Naive thymus-derived CD4-positive, alpha-beta T cell (primary cell): ENCODE measurements at regions of chr4 and their contacts with region 1.

Region 1: DNA sequence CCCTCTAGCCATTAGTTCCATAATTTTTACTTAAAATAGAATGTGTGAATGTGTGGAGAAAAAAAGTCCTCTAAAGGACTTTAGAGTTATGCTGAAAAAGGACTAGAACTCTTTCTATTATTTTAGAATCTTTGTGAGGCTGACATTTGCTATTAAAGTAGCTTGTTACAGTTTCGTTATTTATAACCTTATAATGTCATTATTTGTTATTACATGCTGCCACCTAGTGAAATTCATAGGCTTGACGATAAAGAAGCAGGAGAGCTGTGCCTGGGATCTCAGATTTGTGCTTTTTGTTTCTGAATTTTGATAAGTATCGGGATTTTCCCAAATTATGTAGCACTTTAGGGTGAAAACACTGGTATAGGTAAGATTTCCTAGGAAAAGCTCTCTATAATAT is 38.5 kb upstream of the TAPT1 start:
- DNase-seq: peak in 7 of 9 donors; percentile 14 to 59 (median 34)
- ATAC-seq: peak; percentile 40
- H3K4me3 ChIP-seq: no peak overlapping the region
- H3K4me3 Mint-ChIP-seq: no peak overlapping the region
- H3K27ac ChIP-seq: no peak overlapping the region
- H3K27ac Mint-ChIP-seq: no peak overlapping the region
- H3K4me1 ChIP-seq: peaks cover 0 to 3% of the 10 kb centered on the region in 2 donors
- H3K4me1 Mint-ChIP-seq: peaks cover 0 to 11% (median 4%) of the 10 kb centered on the region in 7 donors
- H3K27me3 ChIP-seq: no peaks in the 10 kb centered on the region
- H3K27me3 Mint-ChIP-seq: peaks cover 0 to 2% (median 0%) of the 10 kb centered on the region in 5 donors

Region 2: DNA sequence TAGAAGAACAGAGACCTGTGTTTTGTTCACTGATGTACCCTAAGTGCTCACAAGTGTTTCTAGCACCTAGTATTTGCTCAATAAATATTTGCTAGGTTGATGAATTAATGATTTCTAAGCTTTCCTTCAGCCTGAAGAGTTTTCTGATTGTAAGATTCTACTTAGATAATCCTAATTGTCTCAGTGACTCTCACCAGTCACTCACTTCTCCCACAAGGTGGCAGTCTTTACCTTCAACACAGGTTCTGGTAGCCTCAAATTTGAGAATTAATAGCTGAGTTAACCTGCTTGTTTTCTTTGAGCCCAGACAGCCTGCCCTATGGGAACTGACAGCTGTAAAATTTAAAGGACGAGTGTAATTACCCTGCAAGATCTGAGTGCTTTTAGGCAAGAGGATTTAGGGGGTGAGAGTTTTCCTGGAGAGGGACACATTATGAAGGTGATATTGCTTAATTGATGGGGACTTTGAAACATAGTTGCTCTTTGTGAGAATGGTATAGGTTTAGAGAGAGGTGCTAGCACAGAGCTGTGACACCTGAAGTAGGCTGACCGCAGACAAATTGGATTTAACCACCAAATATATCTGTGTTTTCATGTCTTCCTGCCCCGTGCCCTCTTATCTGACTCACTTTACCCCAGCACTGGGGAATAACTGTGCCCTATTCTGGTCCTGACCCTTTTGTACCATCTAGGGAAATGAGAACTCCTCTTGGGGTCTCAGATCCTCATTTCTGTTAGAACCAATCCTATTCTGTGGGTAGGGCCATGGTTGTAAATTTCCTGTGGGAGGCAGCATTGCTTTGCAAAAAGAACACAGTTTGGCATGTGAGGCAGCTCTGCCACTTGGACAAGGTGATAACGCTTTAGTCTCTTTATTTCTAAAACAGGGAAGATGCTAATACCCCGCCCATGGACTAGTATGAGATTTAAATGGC is 458.9 kb before region 1 on chr4:
- CTCF ChIA-PET with region 1: interaction called, 3 read pairs
- POLR2A ChIA-PET with region 1: no interaction called
- intact Hi-C with region 1: loop called in 1 of 2 experiments (anchors 2 kb)
- DNase-seq: peak in 7 of 9 donors; percentile 37 to 64 (median 52)
- ATAC-seq: peak; percentile 80
- H3K4me3 ChIP-seq: no peak overlapping the region
- H3K4me3 Mint-ChIP-seq: no peak overlapping the region
- H3K27ac ChIP-seq: no peak overlapping the region
- H3K27ac Mint-ChIP-seq: peak overlapping the region in 3 of 9 donors; percentile 21 to 78 (median 60)
- H3K4me1 ChIP-seq: peaks cover 0 to 4% of the 10 kb centered on the region in 2 donors
- H3K4me1 Mint-ChIP-seq: peaks cover 26 to 76% (median 43%) of the 10 kb centered on the region in 7 donors
- H3K27me3 ChIP-seq: no peaks in the 10 kb centered on the region
- H3K27me3 Mint-ChIP-seq: no peaks in the 10 kb centered on the region

Region 3: GRCh38 chr4:15882675-15883086 is 382.1 kb before region 1 on chr4:
- CTCF ChIA-PET with region 1: interaction called, 4 read pairs
- POLR2A ChIA-PET with region 1: no interaction called
- intact Hi-C with region 1: loop called (anchors 1 to 10 kb)
- DNase-seq: peak in 7 of 9 donors; percentile 22 to 52 (median 41)
- ATAC-seq: peak; percentile 89
- H3K4me3 ChIP-seq: no peak overlapping the region
- H3K4me3 Mint-ChIP-seq: no peak overlapping the region
- H3K27ac ChIP-seq: no peak overlapping the region
- H3K27ac Mint-ChIP-seq: peak overlapping the region in 1 of 9 donors; percentile 2
- H3K4me1 ChIP-seq: no peaks in the 10 kb centered on the region
- H3K4me1 Mint-ChIP-seq: peaks cover 0 to 13% (median 0%) of the 10 kb centered on the region in 7 donors
- H3K27me3 ChIP-seq: no peaks in the 10 kb centered on the region
- H3K27me3 Mint-ChIP-seq: peaks cover 0 to 20% (median 4%) of the 10 kb centered on the region in 5 donors

Region 4: DNA sequence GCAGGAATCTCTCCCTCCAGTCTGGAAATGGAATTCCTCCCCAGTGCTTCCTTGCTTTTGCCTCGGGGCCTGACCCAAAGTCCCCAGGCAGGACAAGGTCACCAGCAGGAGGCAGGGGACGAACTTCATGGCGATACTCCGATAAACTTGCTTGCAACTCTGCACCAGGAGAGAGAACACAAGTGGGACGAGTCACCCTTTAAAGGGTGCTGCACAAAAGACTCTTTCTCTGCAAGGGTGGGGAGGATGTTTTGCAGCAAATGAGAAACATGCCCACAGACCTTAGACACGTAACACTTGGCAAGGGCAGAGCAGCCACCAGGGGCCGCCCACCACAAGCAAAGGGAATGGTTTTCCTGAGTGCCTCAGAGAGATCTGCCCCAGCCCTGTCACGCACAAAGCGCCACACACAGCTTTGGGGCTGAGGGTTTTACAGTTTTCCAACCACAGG is 301.8 kb before region 1 on chr4 and contains the start of gene FGFBP2:
- CTCF ChIA-PET with region 1: interaction called, 3 read pairs
- POLR2A ChIA-PET with region 1: no interaction called
- intact Hi-C with region 1: loop called in 1 of 2 experiments (anchors 5 kb)
- DNase-seq: peak; percentile 10 to 73 (median 57)
- ATAC-seq: peak; percentile 78
- H3K4me3 ChIP-seq: no peak within 1 kb of the TSS
- H3K4me3 Mint-ChIP-seq: peak within 1 kb of the TSS in 9 of 10 donors; percentile 33 to 83 (median 56)
- H3K27ac ChIP-seq: no peak within 1 kb of the TSS
- H3K27ac Mint-ChIP-seq: peak within 1 kb of the TSS in 5 of 9 donors; percentile 43 to 59 (median 51)
- H3K4me1 ChIP-seq: peaks cover 5 to 15% of the 10 kb centered on the region in 2 donors
- H3K4me1 Mint-ChIP-seq: peaks cover 6 to 26% (median 18%) of the 10 kb centered on the region in 7 donors
- H3K27me3 ChIP-seq: no peaks in the 10 kb centered on the region
- H3K27me3 Mint-ChIP-seq: peaks cover 6 to 14% (median 8%) of the 10 kb centered on the region in 5 donors
- total RNA-seq, gene FGFBP2: 1.2 to 54.8 (median 4.5) TPM

Region 5: DNA sequence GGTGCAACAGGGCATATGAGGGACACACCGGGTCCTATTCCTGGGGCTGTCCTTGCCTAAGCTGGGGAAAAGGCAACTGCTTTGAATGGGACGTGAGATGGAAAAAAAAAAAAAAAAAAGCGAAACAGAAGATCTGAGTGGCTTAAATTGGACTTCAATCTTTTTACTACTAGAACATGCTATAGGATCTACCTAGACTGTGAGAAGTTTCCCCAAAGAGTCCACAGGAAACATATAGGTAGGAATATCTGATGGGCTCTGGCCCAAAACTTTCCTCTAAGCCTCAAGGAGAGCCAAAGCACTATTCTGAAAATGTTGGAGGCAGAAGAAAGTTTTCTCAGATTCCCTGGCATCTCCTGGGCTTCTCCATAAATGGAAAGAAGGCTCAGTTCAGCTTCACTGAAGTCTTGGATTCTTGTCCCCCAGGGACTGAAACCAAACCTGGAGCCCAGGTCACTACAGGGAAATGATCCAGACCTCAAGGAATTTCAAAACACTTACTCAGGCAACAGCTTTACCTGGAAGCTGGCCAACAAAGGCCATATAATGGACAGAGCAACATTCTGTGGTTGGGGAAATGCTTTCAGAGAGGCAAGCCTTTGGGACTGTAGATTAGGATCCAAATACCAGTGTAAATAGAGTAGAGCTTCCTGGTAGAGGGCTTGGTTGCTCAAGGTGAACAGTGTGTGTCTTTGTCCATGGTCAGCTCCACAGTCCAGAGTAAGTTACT is 124.1 kb before region 1 on chr4:
- CTCF ChIA-PET with region 1: no interaction called
- POLR2A ChIA-PET with region 1: no interaction called
- intact Hi-C with region 1: no loop called
- DNase-seq: no peak
- ATAC-seq: no peak
- H3K4me3 ChIP-seq: no peak overlapping the region
- H3K4me3 Mint-ChIP-seq: no peak overlapping the region
- H3K27ac ChIP-seq: no peak overlapping the region
- H3K27ac Mint-ChIP-seq: no peak overlapping the region
- H3K4me1 ChIP-seq: no peaks in the 10 kb centered on the region
- H3K4me1 Mint-ChIP-seq: no peaks in the 10 kb centered on the region
- H3K27me3 ChIP-seq: no peaks in the 10 kb centered on the region
- H3K27me3 Mint-ChIP-seq: peaks cover 0 to 28% (median 4%) of the 10 kb centered on the region in 5 donors

Region 6: DNA sequence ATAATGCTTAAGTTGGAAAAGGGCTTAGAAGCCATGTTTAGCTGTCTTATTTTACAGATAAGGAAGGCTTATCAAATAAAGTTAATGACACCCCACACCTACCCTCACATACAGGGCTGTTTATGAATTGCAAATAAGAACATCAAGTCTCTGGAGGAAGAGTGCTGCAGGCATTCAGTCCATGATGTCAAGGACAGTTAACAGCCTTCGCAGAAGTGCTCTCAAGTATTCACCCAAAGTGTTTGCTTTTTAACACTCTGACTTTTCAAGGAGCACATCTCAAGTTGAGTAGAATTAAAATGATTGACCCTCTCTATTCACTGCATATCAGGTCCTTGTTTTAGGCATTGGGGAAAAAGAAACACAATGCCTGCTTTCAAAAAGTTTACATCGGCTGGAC is 305.0 kb after region 1 on chr4:
- CTCF ChIA-PET with region 1: no interaction called
- POLR2A ChIA-PET with region 1: no interaction called
- intact Hi-C with region 1: no loop called
- DNase-seq: no peak
- ATAC-seq: no peak
- H3K4me3 ChIP-seq: no peak overlapping the region
- H3K4me3 Mint-ChIP-seq: no peak overlapping the region
- H3K27ac ChIP-seq: no peak overlapping the region
- H3K27ac Mint-ChIP-seq: no peak overlapping the region
- H3K4me1 ChIP-seq: no peaks in the 10 kb centered on the region
- H3K4me1 Mint-ChIP-seq: no peaks in the 10 kb centered on the region
- H3K27me3 ChIP-seq: no peaks in the 10 kb centered on the region
- H3K27me3 Mint-ChIP-seq: peaks cover 0 to 13% (median under 1%) of the 10 kb centered on the region in 5 donors